ENCODE measurements at regions of chrX and their contacts with region 1.

Region 1: GRCh38 chrX:45322382-45322781 is 121.7 kb upstream of the DIPK2B start:
- DNase-seq: peak; percentile 74
- H3K4me3 ChIP-seq: no peak overlapping the region
- H3K27ac ChIP-seq: peak overlapping the region; percentile 43
- H3K4me1 ChIP-seq: peaks cover 14% of the 10 kb centered on the region
- H3K27me3 ChIP-seq: no peaks in the 10 kb centered on the region
- CTCF ChIP-seq: peak; percentile 66 to 74

Region 2: GRCh38 chrX:45126158-45126557 is 196.2 kb before region 1 on chrX:
- CTCF ChIA-PET with region 1: no interaction called
- dilution Hi-C with region 1: no loop called
- in situ Hi-C with region 1: no loop called
- intact Hi-C with region 1: no loop called
- DNase-seq: no peak
- H3K4me3 ChIP-seq: no peak overlapping the region
- H3K27ac ChIP-seq: no peak overlapping the region
- H3K4me1 ChIP-seq: no peaks in the 10 kb centered on the region
- H3K27me3 ChIP-seq: peaks cover 2% of the 10 kb centered on the region
- CTCF ChIP-seq: no peak

Region 3: GRCh38 chrX:45295259-45295986 is 27.0 kb before region 1 on chrX:
- CTCF ChIA-PET with region 1: no interaction called
- dilution Hi-C with region 1: no loop called
- in situ Hi-C with region 1: no loop called
- intact Hi-C with region 1: no loop called
- DNase-seq: peak; percentile 46
- H3K4me3 ChIP-seq: no peak overlapping the region
- H3K27ac ChIP-seq: no peak overlapping the region
- H3K4me1 ChIP-seq: peaks cover 5% of the 10 kb centered on the region
- H3K27me3 ChIP-seq: peaks cover 3% of the 10 kb centered on the region
- CTCF ChIP-seq: no peak

Region 4: GRCh38 chrX:45479835-45480422 is 157.5 kb after region 1 on chrX:
- CTCF ChIA-PET with region 1: no interaction called
- dilution Hi-C with region 1: no loop called
- in situ Hi-C with region 1: no loop called
- intact Hi-C with region 1: loop called (anchors 1 kb)
- DNase-seq: peak; percentile 99
- H3K4me3 ChIP-seq: no peak overlapping the region
- H3K27ac ChIP-seq: peak overlapping the region; percentile 99
- H3K4me1 ChIP-seq: peaks cover 26% of the 10 kb centered on the region
- H3K27me3 ChIP-seq: no peaks in the 10 kb centered on the region
- CTCF ChIP-seq: no peak

Region 5: DNA sequence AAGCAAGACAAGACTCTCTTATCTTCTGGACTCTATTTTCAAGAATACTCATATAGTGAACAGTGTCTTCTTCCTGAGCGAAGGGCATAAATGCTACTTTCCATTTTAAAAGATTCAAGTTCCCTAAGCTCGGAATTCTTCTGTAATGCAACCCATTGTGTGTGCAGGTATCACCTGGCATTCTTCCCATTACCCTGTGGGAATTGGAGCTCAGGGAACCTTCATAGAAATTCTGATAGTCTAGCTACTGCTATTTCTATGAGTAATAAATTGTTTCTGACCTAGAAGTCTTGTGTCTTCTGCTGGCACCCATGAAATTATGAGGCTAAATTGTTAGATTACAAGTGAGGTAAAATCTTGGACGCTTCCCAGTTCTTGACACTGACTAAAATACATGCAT is 202.4 kb after region 1 on chrX:
- CTCF ChIA-PET with region 1: no interaction called
- dilution Hi-C with region 1: no loop called
- in situ Hi-C with region 1: no loop called
- intact Hi-C with region 1: no loop called
- DNase-seq: peak; percentile 17
- H3K4me3 ChIP-seq: no peak overlapping the region
- H3K27ac ChIP-seq: peak overlapping the region; percentile 11
- H3K4me1 ChIP-seq: peaks cover 13% of the 10 kb centered on the region
- H3K27me3 ChIP-seq: no peaks in the 10 kb centered on the region
- CTCF ChIP-seq: no peak

Region 6: GRCh38 chrX:45557390-45557789 is 235.0 kb after region 1 on chrX:
- CTCF ChIA-PET with region 1: no interaction called
- dilution Hi-C with region 1: no loop called
- in situ Hi-C with region 1: no loop called
- intact Hi-C with region 1: loop called (anchors 1 kb)
- DNase-seq: peak; percentile 25
- H3K4me3 ChIP-seq: no peak overlapping the region
- H3K27ac ChIP-seq: no peak overlapping the region
- H3K4me1 ChIP-seq: no peaks in the 10 kb centered on the region
- H3K27me3 ChIP-seq: no peaks in the 10 kb centered on the region
- CTCF ChIP-seq: peak in 1 of 2 donors; percentile 49

Region 7: GRCh38 chrX:45749375-45749774 is 427.0 kb after region 1 on chrX:
- CTCF ChIA-PET with region 1: no interaction called
- dilution Hi-C with region 1: no loop called
- in situ Hi-C with region 1: loop called (anchors 25 kb)
- intact Hi-C with region 1: loop called (anchors 1 kb)
- DNase-seq: no peak
- H3K4me3 ChIP-seq: no peak overlapping the region
- H3K27ac ChIP-seq: peak overlapping the region; percentile 86
- H3K4me1 ChIP-seq: peaks cover 92% of the 10 kb centered on the region
- H3K27me3 ChIP-seq: no peaks in the 10 kb centered on the region
- CTCF ChIP-seq: peak; percentile 40 to 56

Region 8: GRCh38 chrX:45801554-45801953 is 479.2 kb after region 1 on chrX:
- CTCF ChIA-PET with region 1: no interaction called
- dilution Hi-C with region 1: no loop called
- in situ Hi-C with region 1: no loop called
- intact Hi-C with region 1: loop called (anchors 2 kb)
- DNase-seq: peak; percentile 50
- H3K4me3 ChIP-seq: peak overlapping the region in 1 of 3 experiments; percentile 40
- H3K27ac ChIP-seq: peak overlapping the region; percentile 91
- H3K4me1 ChIP-seq: peaks cover 48% of the 10 kb centered on the region
- H3K27me3 ChIP-seq: no peaks in the 10 kb centered on the region
- CTCF ChIP-seq: peak; percentile 39 to 52

Region 9: DNA sequence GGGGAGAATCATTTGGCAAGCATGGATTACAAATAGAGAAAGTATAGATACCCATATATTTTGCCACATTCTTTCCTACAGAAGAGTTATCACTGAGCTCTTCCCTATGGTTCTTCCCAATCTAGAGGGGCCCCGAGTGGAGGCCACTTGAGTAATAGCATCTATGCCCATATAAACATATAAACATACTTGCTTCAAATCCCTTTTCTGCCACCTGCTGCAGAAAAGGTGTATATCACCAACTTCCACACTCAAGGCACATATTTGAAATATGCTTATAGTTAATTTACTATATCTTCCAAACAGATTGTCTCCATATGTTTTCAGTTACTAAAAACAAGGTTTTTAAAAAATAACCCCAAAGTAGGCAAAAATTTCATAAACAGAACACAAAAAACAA is 521.1 kb after region 1 on chrX:
- CTCF ChIA-PET with region 1: interaction called, 5 read pairs
- dilution Hi-C with region 1: no loop called
- in situ Hi-C with region 1: no loop called
- intact Hi-C with region 1: loop called (anchors 2 kb)
- DNase-seq: no peak
- H3K4me3 ChIP-seq: no peak overlapping the region
- H3K27ac ChIP-seq: no peak overlapping the region
- H3K4me1 ChIP-seq: peaks cover 42% of the 10 kb centered on the region
- H3K27me3 ChIP-seq: no peaks in the 10 kb centered on the region
- CTCF ChIP-seq: peak; percentile 2 to 43

Region 10: GRCh38 chrX:46408553-46409407 is 1086.4 kb after region 1 on chrX:
- CTCF ChIA-PET with region 1: no interaction called
- dilution Hi-C with region 1: no loop called
- in situ Hi-C with region 1: no loop called
- intact Hi-C with region 1: loop called (anchors 1 kb)
- DNase-seq: peak; percentile 39
- H3K4me3 ChIP-seq: no peak overlapping the region
- H3K27ac ChIP-seq: no peak overlapping the region
- H3K4me1 ChIP-seq: peaks cover 5% of the 10 kb centered on the region
- H3K27me3 ChIP-seq: no peaks in the 10 kb centered on the region
- CTCF ChIP-seq: peak; percentile 88 to 92